ENCODE measurements at regions of chr3 and their contacts with region 1.

Region 1: DNA sequence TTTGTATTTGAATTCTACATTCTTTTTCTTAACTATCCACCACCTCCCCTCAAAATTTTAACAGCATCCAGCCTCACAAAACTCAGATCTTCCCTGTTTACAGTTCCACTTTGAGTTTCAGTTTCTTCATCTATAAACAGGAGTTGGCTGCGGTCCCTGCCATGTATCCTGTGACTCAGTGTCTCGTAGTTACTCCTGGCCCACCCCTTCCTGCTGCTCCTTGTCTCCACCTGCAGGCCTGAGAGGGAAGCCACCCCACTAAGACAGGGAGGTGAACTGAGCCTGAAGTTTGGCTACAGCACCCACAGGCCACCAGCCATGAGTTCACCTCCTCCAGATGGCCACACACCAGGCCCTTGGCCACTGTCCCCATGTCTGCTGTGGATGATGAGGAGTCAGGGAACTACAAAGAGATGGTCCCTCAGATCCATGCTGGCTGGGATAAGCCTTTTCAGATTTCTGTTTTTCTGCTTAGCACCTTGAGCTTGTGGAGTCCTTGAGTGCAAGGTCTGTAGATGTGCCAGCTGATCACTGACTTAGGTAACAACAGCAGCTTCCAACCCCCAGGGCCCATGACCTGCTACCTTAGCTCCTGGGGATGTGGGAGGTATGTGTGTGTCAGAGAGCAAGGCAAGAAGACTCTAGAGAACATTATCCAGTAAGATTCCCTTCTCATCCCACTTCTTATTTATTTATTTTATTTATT is 37.5 kb downstream of the CD86 start:
- DNase-seq: peak in 1 of 6 donors; percentile 12
- ATAC-seq: peak in 3 of 4 donors; percentile 56 to 81 (median 75)
- H3K4me3 ChIP-seq: no peak overlapping the region
- H3K27ac ChIP-seq: no peak overlapping the region
- H3K4me1 ChIP-seq: no peaks in the 10 kb centered on the region
- H3K27me3 ChIP-seq: no peaks in the 10 kb centered on the region
- CTCF ChIP-seq: no peak

Region 2: GRCh38 chr3:122263974-122264588 is 171.5 kb after region 1 on chr3:
- intact Hi-C with region 1: loop called in 1 of 3 experiments (anchors 5 kb)
- DNase-seq: no peak
- ATAC-seq: no peak
- H3K4me3 ChIP-seq: no peak overlapping the region
- H3K27ac ChIP-seq: no peak overlapping the region
- H3K4me1 ChIP-seq: no peaks in the 10 kb centered on the region
- H3K27me3 ChIP-seq: no peaks in the 10 kb centered on the region
- CTCF ChIP-seq: no peak

Region 3: DNA sequence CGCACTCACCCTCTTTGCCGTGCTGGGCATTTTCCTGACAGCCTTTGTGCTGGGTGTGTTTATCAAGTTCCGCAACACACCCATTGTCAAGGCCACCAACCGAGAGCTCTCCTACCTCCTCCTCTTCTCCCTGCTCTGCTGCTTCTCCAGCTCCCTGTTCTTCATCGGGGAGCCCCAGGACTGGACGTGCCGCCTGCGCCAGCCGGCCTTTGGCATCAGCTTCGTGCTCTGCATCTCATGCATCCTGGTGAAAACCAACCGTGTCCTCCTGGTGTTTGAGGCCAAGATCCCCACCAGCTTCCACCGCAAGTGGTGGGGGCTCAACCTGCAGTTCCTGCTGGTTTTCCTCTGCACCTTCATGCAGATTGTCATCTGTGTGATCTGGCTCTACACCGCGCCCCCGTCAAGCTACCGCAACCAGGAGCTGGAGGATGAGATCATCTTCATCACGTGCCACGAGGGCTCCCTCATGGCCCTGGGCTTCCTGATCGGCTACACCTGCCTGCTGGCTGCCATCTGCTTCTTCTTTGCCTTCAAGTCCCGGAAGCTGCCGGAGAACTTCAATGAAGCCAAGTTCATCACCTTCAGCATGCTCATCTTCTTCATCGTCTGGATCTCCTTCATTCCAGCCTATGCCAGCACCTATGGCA is 191.3 kb after region 1 on chr3:
- intact Hi-C with region 1: loop called in 1 of 3 experiments (anchors 10 kb)
- DNase-seq: no peak
- ATAC-seq: no peak
- H3K4me3 ChIP-seq: no peak overlapping the region
- H3K27ac ChIP-seq: no peak overlapping the region
- H3K4me1 ChIP-seq: no peaks in the 10 kb centered on the region
- H3K27me3 ChIP-seq: no peaks in the 10 kb centered on the region
- CTCF ChIP-seq: no peak

Measured in pancreas (tissue), 10 donors.